ENCODE measurements at regions of chr4 and their contacts with region 1.

Region 1: GRCh38 chr4:184745831-184746795 is 12.2 kb upstream of the CENPU start:
- DNase-seq: peak; percentile 43
- ATAC-seq: peak; percentile 87
- H3K4me3 ChIP-seq: no peak overlapping the region
- H3K27ac ChIP-seq: no peak overlapping the region
- H3K4me1 ChIP-seq: no peaks in the 10 kb centered on the region
- H3K27me3 ChIP-seq: no peaks in the 10 kb centered on the region
- CTCF ChIP-seq: peak; percentile 82

Region 2: DNA sequence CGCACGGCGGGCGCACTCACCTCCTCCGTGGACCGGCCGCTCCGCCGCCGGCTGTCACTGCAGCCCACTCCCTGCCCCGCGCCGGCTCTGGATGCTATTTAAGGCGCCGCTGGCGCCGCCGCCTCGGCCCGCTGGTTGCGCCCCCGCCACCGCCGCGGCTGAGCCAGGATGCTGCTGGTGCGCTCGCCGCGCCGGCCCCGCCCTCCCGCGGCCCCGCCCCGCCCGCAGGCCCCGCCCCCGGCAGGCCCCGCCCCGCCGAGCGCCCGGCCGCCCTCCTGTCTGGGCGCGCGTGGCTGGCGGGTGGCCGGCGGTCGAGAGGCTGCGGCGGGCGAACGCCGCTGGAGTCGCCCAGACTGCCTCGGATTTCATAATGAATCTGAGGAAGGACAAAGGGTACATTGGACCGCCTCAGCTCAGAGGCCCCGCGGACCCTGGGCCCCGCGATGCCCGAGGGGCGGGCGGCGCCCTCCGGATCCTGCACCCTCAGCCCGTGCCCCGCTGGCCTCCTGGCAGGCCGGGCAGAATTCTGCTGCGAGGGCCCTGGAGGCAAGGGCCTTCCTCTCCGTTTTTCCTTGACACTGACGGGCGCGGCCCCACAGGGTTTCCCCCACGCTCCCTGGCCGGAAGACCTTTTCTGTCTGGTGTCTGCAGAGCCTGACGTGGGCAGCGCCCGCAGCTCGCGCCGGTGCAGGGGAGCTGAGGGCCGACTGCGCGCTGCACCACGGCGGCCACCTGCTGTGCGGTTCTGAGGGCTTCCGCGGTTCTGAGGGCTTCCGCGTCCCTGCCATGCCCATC is 80.0 kb after region 1 on chr4 and contains the start of gene ACSL1:
- CTCF ChIA-PET with region 1: no interaction called
- POLR2A ChIA-PET with region 1: no interaction called
- in situ Hi-C with region 1: no loop called
- intact Hi-C with region 1: loop called (anchors 2 kb)
- DNase-seq: no peak
- ATAC-seq: peak; percentile 93
- H3K4me3 ChIP-seq: peak within 1 kb of the TSS; percentile 57 to 62
- H3K27ac ChIP-seq: peak within 1 kb of the TSS; percentile 48; the same call in 1 of the 2 replicates
- H3K4me1 ChIP-seq: peaks cover 2% of the 10 kb centered on the region; the same call in 1 of the 2 replicates
- H3K27me3 ChIP-seq: no peaks in the 10 kb centered on the region
- CTCF ChIP-seq: no peak; the same call in 1 of the 2 replicates
- total RNA-seq, gene ACSL1: 15.4 TPM

Region 3: GRCh38 chr4:185066179-185066578 is 320.1 kb after region 1 on chr4:
- CTCF ChIA-PET with region 1: no interaction called
- POLR2A ChIA-PET with region 1: no interaction called
- in situ Hi-C with region 1: no loop called
- intact Hi-C with region 1: no loop called
- DNase-seq: no peak
- ATAC-seq: no peak
- H3K4me3 ChIP-seq: no peak overlapping the region
- H3K27ac ChIP-seq: no peak overlapping the region
- H3K4me1 ChIP-seq: no peaks in the 10 kb centered on the region
- H3K27me3 ChIP-seq: peaks cover 2% of the 10 kb centered on the region
- CTCF ChIP-seq: no peak